ENCODE measurements at regions of chr10 and their contacts with region 1.

Region 1: DNA sequence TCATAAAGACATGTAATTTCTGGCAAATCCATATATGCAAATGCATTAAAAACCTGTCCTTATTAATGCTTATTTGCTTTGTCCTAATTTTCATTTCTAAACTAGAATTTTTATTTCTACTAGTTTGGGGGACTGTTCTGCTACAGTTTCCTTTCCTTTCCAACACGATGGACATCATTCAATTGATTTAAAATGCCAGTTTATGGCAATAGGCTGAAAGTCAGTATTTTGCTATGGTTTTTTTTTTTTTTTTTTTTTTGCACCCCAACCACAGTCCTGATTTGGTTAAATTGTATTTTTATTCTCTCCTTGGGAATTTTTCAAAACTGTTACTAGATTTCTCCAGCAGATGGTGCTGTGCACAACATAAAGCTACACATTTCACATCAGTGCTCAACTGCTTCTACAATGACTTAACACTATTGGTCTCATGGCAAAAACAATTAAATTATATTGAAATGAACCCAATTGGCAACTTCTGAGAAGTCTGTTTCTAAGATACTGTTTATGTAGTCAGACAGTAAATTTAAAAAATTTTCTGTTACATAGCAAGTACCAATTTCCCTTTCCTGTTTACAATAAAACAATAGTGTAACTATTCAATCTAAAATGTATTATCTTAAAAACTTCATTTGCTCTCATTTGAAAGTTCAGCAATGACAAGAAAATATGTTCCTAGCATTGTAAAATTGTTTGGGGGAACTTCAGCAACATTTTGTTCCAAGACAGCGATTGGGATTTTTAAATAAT is 193.8 kb upstream of the CCDC6 start:
- DNase-seq: peak in 1 of 2 donors; percentile 69
- ATAC-seq: peak; percentile 44 to 57 (median 52)
- H3K4me3 ChIP-seq: no peak overlapping the region
- H3K4me3 Mint-ChIP-seq: no peak overlapping the region
- H3K27ac ChIP-seq: no peak overlapping the region
- H3K27ac Mint-ChIP-seq: no peak overlapping the region
- H3K4me1 ChIP-seq: no peaks in the 10 kb centered on the region
- H3K4me1 Mint-ChIP-seq: no peaks in the 10 kb centered on the region
- H3K27me3 ChIP-seq: no peaks in the 10 kb centered on the region
- H3K27me3 Mint-ChIP-seq: no peaks in the 10 kb centered on the region
- CTCF ChIP-seq: peak; percentile 74

Region 2: DNA sequence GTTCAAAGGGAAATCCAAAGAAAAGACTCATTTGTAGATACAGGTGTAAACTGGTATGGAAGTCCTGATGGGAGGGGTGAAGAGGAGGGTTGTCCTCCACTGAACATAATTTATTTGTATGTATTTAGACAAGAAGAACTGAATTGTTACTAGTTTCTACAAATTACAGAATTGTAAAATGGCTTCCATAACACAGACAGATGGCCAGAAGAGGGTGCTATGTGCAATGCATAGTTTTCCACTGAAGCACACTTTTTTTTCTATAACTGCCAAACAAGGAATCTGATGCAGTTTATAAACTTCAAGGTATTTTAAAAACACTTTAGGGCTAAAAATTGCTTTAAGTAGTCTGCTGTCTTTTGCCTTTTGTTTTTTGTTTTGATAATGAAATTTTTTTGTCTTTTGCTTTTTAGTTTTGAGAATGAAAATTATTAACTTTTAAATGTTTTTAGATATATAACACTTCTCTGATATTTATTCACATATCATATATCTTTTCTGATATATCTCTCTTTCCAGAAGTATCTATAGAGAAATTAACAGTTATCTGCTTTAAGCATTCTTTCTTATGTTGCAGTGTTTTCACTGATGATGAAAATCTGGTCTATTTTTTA is 865.2 kb before region 1 on chr10:
- intact Hi-C with region 1: no loop called
- DNase-seq: no peak
- ATAC-seq: no peak
- H3K4me3 ChIP-seq: no peak overlapping the region
- H3K4me3 Mint-ChIP-seq: no peak overlapping the region
- H3K27ac ChIP-seq: no peak overlapping the region
- H3K27ac Mint-ChIP-seq: no peak overlapping the region
- H3K4me1 ChIP-seq: no peaks in the 10 kb centered on the region
- H3K4me1 Mint-ChIP-seq: no peaks in the 10 kb centered on the region
- H3K27me3 ChIP-seq: no peaks in the 10 kb centered on the region
- H3K27me3 Mint-ChIP-seq: no peaks in the 10 kb centered on the region
- CTCF ChIP-seq: no peak

Region 3: DNA sequence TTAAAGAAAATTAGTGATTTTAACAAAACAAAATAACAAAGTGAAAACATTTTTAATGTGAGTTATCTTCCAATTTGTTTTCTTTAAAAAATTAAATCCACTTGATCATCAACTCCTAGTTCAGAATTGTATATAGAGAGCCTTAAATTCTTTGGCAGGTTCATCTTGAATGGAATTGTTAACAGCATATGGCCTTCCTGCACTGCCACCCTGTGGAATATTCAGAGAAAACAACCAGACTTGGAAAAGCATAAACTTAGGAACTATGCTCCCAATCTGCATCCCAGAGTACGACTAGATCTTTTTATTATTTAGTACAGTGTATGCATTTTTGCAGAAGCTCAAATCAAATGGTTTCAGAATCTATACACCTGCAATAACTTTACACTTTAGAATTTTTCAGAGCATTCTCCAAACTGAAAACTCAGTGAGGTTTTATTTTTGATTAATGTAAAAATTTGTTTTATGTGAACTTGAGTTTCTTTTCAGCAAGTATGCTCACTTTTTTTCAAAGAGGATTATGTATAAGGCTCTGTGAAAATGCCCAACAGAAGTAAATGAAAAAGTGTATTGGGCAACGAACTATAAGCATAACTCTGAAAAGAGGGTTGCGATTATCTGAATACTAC is 334.4 kb after region 1 on chr10:
- intact Hi-C with region 1: loop called (anchors 5 kb)
- DNase-seq: peak in 1 of 2 donors; percentile 32
- ATAC-seq: no peak
- H3K4me3 ChIP-seq: no peak overlapping the region
- H3K4me3 Mint-ChIP-seq: no peak overlapping the region
- H3K27ac ChIP-seq: no peak overlapping the region
- H3K27ac Mint-ChIP-seq: no peak overlapping the region
- H3K4me1 ChIP-seq: no peaks in the 10 kb centered on the region
- H3K4me1 Mint-ChIP-seq: no peaks in the 10 kb centered on the region
- H3K27me3 ChIP-seq: no peaks in the 10 kb centered on the region
- H3K27me3 Mint-ChIP-seq: no peaks in the 10 kb centered on the region
- CTCF ChIP-seq: peak; percentile 27

Region 4: GRCh38 chr10:60646966-60647796 is 547.0 kb after region 1 on chr10:
- intact Hi-C with region 1: loop called (anchors 1 kb)
- DNase-seq: peak in 1 of 2 donors; percentile 77
- ATAC-seq: peak in 2 of 3 donors; percentile 53 to 67
- H3K4me3 ChIP-seq: no peak overlapping the region
- H3K4me3 Mint-ChIP-seq: no peak overlapping the region
- H3K27ac ChIP-seq: no peak overlapping the region
- H3K27ac Mint-ChIP-seq: no peak overlapping the region
- H3K4me1 ChIP-seq: no peaks in the 10 kb centered on the region
- H3K4me1 Mint-ChIP-seq: no peaks in the 10 kb centered on the region
- H3K27me3 ChIP-seq: no peaks in the 10 kb centered on the region
- H3K27me3 Mint-ChIP-seq: no peaks in the 10 kb centered on the region
- CTCF ChIP-seq: peak; percentile 87

Region 5: GRCh38 chr10:60769406-60769805 is 669.2 kb after region 1 on chr10:
- intact Hi-C with region 1: loop called (anchors 5 kb)
- DNase-seq: no peak
- ATAC-seq: no peak
- H3K4me3 ChIP-seq: no peak overlapping the region
- H3K4me3 Mint-ChIP-seq: no peak overlapping the region
- H3K27ac ChIP-seq: no peak overlapping the region
- H3K27ac Mint-ChIP-seq: no peak overlapping the region
- H3K4me1 ChIP-seq: no peaks in the 10 kb centered on the region
- H3K4me1 Mint-ChIP-seq: no peaks in the 10 kb centered on the region
- H3K27me3 ChIP-seq: no peaks in the 10 kb centered on the region
- H3K27me3 Mint-ChIP-seq: peaks cover 0 to 11% of the 10 kb centered on the region in 2 donors
- CTCF ChIP-seq: no peak